Tibial artery (tissue), 4 donors: ENCODE measurements at regions of chr16 and their contacts with region 1.

Region 1: DNA sequence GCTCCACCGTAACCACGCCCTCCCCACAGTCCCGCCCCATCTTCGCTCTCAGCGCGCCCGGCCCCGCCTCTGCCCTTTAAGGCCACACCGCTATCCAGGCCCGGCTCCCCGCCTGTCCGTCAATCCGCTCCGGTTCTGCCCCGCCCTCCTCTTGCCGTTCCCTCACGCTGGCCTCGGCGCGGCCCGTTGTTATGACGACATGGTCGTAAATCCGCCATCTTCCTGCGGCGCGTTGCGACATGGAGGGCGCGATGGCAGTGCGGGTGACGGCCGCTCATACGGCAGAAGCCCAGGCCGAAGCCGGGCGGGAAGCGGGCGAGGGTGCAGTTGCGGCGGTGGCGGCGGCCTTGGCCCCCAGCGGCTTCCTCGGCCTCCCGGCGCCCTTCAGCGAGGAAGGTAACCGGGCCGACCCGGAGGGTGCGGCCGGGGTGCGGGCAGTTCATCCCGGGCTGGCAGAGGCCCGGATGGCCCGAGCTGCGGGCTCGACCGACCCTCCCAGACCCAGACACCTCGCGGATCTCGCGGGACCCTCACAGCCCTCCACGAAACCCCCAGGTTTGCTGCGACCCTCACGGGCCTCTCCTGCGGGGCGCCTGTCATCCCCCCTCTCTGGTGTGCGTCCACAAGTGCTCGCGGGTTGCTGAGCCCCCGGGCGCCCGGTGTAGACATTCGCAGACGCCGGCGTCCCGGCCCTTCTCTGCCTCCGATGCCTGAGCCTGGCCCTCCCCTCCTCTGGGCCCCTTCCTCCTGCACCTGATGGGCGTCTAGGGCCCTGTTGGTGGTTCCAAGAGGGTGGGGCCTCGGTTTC is at the start of gene E4F1:
- DNase-seq: peak; percentile 99 to 100
- H3K4me3 ChIP-seq: peak within 1 kb of the TSS; percentile 89 to 91
- H3K27ac ChIP-seq: peak within 1 kb of the TSS; percentile 83 to 85
- H3K4me1 ChIP-seq: peaks cover 0 to 33% (median 19%) of the 10 kb centered on the region in 4 donors
- H3K27me3 ChIP-seq: no peaks in the 10 kb centered on the region
- CTCF ChIP-seq: no peak

Region 2: DNA sequence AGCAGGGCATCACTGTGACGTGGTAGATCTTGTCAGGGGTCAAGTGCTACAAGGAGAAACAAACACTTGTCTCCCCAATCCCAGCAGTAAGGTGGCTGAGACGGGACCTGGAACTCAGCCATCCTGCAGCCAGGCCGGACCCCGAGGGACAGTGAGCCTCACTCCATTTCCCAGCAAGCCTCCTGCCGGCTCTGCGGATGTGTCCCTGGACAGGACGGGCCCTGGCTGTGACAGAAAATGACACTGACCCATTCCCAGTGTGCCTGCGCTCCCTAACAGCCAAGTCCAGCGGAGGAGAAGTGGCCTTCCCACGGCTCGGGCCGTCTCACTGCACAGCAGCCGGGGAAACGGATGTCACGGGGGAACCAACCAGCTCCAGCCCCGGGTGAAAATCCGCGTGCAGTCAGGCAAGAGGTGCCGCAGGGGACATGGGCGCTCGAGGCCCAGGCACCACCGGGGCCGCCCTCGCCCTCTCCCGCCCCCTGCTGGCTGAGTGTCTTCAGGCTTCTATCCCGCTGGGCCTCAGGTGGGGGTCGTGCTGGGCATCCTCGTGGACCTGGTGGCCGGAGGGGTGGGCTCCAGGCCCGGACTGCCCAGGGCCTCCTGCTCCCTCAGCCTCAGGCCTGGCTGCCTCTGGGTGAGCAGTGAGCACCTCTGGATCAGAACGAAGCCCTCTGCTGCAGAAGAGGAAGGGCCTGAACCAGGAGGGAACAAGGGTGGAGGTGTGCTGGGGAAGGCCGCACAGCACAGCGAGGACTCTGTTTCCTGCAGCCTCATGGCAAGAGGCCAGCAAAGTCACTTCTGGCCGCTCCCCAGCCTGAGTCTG is 1490.0 kb before region 1 on chr16:
- intact Hi-C with region 1: loop called (anchors 10 kb)
- DNase-seq: peak in 1 of 2 donors; percentile 62
- H3K4me3 ChIP-seq: no peak overlapping the region
- H3K27ac ChIP-seq: no peak overlapping the region
- H3K4me1 ChIP-seq: peaks cover 0 to 6% (median 5%) of the 10 kb centered on the region in 4 donors
- H3K27me3 ChIP-seq: peaks cover 0 to 8% of the 10 kb centered on the region in 2 donors
- CTCF ChIP-seq: no peak

Region 3: GRCh38 chr16:2267913-2268666 is 44.5 kb after region 1 on chr16 and contains the start of gene RNPS1:
- intact Hi-C with region 1: loop called (anchors 5 kb)
- DNase-seq: peak; percentile 94 to 97
- H3K4me3 ChIP-seq: peak within 1 kb of the TSS; percentile 74 to 92
- H3K27ac ChIP-seq: peak within 1 kb of the TSS; percentile 80 to 96
- H3K4me1 ChIP-seq: peaks cover 6 to 36% (median 30%) of the 10 kb centered on the region in 4 donors
- H3K27me3 ChIP-seq: no peaks in the 10 kb centered on the region
- CTCF ChIP-seq: no peak